ENCODE measurements at regions of chr7 and their contacts with region 1.

Region 1: DNA sequence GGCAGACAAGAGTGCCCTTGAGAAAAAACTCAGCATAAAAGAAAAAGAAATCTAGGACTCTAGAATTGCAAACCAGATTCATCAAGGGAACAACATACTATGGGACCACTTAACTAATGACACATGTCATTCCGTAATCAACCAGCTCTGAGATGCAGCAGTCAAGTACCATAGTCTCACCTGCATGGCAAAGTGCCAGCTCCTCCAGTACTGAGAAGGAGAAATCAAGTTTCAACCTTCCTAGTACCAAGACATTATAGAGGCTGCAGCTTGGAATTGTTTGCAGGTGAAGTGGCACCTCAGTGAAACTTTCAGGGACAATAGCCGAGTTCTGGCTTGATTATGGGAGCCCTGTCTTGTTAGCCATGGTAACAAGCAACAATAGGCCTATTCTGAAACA is 11.5 kb downstream of the STEAP1 start:
- DNase-seq: peak; percentile 43 to 45
- H3K4me3 ChIP-seq: no peak overlapping the region
- H3K27ac ChIP-seq: no peak overlapping the region
- H3K4me1 ChIP-seq: no peaks in the 10 kb centered on the region
- H3K27me3 ChIP-seq: no peaks in the 10 kb centered on the region
- CTCF ChIP-seq: no peak
- EP300 ChIP-seq: no peak
- POLR2A ChIP-seq: no peak

Region 2: GRCh38 chr7:90430614-90431471 is 265.1 kb after region 1 on chr7:
- intact Hi-C with region 1: loop called (anchors 10 kb)
- DNase-seq: no peak
- H3K4me3 ChIP-seq: no peak overlapping the region
- H3K27ac ChIP-seq: no peak overlapping the region
- H3K4me1 ChIP-seq: no peaks in the 10 kb centered on the region
- H3K27me3 ChIP-seq: no peaks in the 10 kb centered on the region
- CTCF ChIP-seq: no peak
- EP300 ChIP-seq: no peak
- POLR2A ChIP-seq: no peak

Region 3: DNA sequence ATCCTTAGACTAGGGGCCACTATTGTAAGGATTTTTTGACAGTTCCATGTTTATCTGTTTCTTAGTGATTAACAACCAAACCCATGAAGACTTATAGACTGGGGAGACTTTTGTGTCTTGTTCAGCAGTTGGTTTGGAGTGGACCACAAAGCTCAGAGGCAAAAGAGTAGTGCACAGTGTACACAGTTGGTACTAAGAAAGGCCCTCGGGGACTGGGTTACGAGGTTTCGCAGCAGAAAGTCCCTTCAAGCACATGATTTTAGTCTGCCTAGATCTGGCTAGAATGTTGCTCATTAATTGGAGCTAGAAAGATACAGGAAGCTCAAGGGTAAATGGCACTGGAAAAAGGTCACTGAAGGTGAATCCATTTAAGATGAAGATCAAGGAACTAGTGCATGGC is 465.8 kb after region 1 on chr7:
- intact Hi-C with region 1: no loop called
- DNase-seq: no peak
- H3K4me3 ChIP-seq: no peak overlapping the region
- H3K27ac ChIP-seq: no peak overlapping the region
- H3K4me1 ChIP-seq: no peaks in the 10 kb centered on the region
- H3K27me3 ChIP-seq: no peaks in the 10 kb centered on the region
- CTCF ChIP-seq: no peak
- EP300 ChIP-seq: no peak
- POLR2A ChIP-seq: no peak

Region 4: GRCh38 chr7:90804370-90804769 is 638.6 kb after region 1 on chr7:
- intact Hi-C with region 1: no loop called
- DNase-seq: no peak
- H3K4me3 ChIP-seq: no peak overlapping the region
- H3K27ac ChIP-seq: no peak overlapping the region
- H3K4me1 ChIP-seq: no peaks in the 10 kb centered on the region
- H3K27me3 ChIP-seq: no peaks in the 10 kb centered on the region
- CTCF ChIP-seq: no peak
- EP300 ChIP-seq: no peak
- POLR2A ChIP-seq: no peak